CD4-positive, alpha-beta memory T cell (primary cell): ENCODE measurements at regions of chr14 and their contacts with region 1.

Region 1: GRCh38 chr14:35423621-35424020 is 19.1 kb upstream of the NFKBIA start:
- DNase-seq: no peak
- H3K4me3 ChIP-seq: no peak overlapping the region
- H3K4me3 Mint-ChIP-seq: no peak overlapping the region
- H3K27ac ChIP-seq: no peak overlapping the region
- H3K27ac Mint-ChIP-seq: peak overlapping the region in 1 of 7 donors; percentile 9
- H3K4me1 ChIP-seq: peaks cover 8% of the 10 kb centered on the region
- H3K4me1 Mint-ChIP-seq: peaks cover 4 to 6% (median 6%) of the 10 kb centered on the region in 4 donors
- H3K27me3 ChIP-seq: no peaks in the 10 kb centered on the region
- H3K27me3 Mint-ChIP-seq: no peaks in the 10 kb centered on the region

Region 2: DNA sequence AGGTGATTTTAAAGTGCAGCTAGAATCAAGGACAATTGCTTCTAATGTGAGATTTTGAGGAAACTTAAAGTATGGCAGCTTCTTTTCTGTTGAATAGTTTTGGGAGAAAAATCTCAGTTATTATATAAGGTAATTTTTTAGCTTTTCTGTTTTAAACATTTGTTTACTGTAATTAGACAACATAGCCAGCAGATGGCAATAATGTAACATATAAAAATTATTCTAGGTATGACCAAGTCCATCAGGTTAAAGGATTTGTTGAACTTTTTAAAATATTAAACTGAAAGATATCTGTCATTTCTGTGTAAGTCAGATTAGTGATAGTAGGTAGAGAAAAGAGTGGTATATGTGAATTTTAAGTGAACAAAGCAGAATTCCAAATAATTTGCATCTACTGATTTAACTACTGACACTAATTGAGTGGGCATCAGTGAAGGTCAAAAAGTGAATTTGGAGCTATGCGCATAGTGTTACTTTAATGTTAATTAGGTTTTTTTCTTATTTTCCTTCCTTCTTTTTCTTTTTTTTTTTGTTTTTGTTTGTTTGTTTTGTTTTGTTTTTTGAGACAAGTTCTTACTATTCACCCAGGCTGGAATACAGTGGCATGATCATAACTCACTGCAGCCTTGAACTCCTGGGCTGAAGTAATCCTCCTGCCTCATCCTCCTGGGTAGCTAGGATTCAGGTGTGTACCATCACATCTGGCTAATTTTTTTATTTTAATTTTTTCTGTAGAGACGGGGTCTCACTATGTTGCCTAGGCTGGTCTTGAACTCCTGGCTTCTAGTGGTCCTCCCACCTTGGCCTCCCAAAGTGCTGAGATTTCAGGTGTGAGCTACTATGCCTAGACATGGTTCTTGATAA is 282.7 kb before region 1 on chr14:
- CTCF ChIA-PET with region 1: interaction called, 73 read pairs
- POLR2A ChIA-PET with region 1: no interaction called
- intact Hi-C with region 1: loop called (anchors 1 kb)
- DNase-seq: peak in 4 of 5 donors; percentile 38 to 61 (median 53)
- H3K4me3 ChIP-seq: no peak overlapping the region
- H3K4me3 Mint-ChIP-seq: no peak overlapping the region
- H3K27ac ChIP-seq: no peak overlapping the region
- H3K27ac Mint-ChIP-seq: peak overlapping the region; percentile 14 to 92 (median 84)
- H3K4me1 ChIP-seq: peaks cover 10% of the 10 kb centered on the region
- H3K4me1 Mint-ChIP-seq: peaks cover 15 to 23% (median 19%) of the 10 kb centered on the region in 4 donors
- H3K27me3 ChIP-seq: no peaks in the 10 kb centered on the region
- H3K27me3 Mint-ChIP-seq: no peaks in the 10 kb centered on the region

Region 3: GRCh38 chr14:35215110-35215876 is 208.3 kb before region 1 on chr14:
- CTCF ChIA-PET with region 1: interaction called, 16 read pairs
- POLR2A ChIA-PET with region 1: interaction called, 7 read pairs
- intact Hi-C with region 1: no loop called
- DNase-seq: peak in 1 of 5 donors; percentile 24
- H3K4me3 ChIP-seq: no peak overlapping the region
- H3K4me3 Mint-ChIP-seq: no peak overlapping the region
- H3K27ac ChIP-seq: no peak overlapping the region
- H3K27ac Mint-ChIP-seq: peak overlapping the region in 4 of 7 donors; percentile 15 to 81 (median 68)
- H3K4me1 ChIP-seq: peaks cover 7% of the 10 kb centered on the region
- H3K4me1 Mint-ChIP-seq: peaks cover 10 to 29% (median 15%) of the 10 kb centered on the region in 4 donors
- H3K27me3 ChIP-seq: no peaks in the 10 kb centered on the region
- H3K27me3 Mint-ChIP-seq: no peaks in the 10 kb centered on the region

Region 4: DNA sequence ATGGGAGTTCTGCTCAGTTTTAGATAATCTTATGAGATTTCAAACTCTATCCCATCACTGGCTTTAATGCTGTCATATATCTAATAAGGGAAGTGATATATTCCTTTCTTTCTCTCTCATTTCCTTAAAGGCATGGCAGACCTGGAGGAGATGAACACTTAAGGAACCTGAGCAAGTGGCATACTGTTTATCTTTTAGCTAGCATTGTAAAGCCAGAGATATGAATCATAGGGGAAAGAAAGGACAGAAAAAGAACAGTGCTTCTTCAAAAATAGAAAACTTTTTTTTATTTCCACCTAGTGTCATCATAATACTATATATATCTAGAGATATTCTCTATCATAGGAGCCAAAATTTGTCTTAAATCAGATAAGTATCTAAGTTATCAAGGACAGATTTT is 199.7 kb before region 1 on chr14:
- CTCF ChIA-PET with region 1: interaction called, 87 read pairs
- POLR2A ChIA-PET with region 1: no interaction called
- intact Hi-C with region 1: loop called (anchors 1 kb)
- DNase-seq: no peak
- H3K4me3 ChIP-seq: no peak overlapping the region
- H3K4me3 Mint-ChIP-seq: no peak overlapping the region
- H3K27ac ChIP-seq: no peak overlapping the region
- H3K27ac Mint-ChIP-seq: no peak overlapping the region
- H3K4me1 ChIP-seq: peaks cover 6% of the 10 kb centered on the region
- H3K4me1 Mint-ChIP-seq: peaks cover 14 to 39% (median 20%) of the 10 kb centered on the region in 4 donors
- H3K27me3 ChIP-seq: no peaks in the 10 kb centered on the region
- H3K27me3 Mint-ChIP-seq: no peaks in the 10 kb centered on the region